Mammary epithelial cell (primary cell): ENCODE measurements at regions of chr3 and their contacts with region 1.

Region 1: DNA sequence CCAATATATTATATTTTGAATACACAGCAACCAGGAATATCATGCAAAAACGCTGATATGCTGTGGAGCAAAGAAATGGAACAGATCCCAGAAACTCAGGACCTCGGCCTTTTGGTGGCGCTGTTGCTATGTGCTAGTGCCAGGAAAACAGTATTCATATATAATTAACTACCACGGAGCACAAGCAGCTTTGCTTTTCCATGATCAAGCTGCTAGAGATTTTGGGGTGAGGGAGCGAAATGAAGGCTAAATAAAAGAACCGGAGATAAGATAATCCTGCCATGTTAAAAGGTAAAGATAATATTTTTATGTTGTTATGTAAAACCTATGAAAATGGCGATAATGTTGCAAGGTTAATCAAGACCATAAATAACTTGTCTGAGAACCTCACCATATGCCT is 157.7 kb upstream of the FAM3D start:
- DNase-seq: peak; percentile 64
- H3K4me3 ChIP-seq: no peak overlapping the region
- H3K27ac ChIP-seq: no peak overlapping the region
- H3K4me1 ChIP-seq: peaks cover 5% of the 10 kb centered on the region
- H3K27me3 ChIP-seq: no peaks in the 10 kb centered on the region
- CTCF ChIP-seq: peak; percentile 85 to 86

Region 2: DNA sequence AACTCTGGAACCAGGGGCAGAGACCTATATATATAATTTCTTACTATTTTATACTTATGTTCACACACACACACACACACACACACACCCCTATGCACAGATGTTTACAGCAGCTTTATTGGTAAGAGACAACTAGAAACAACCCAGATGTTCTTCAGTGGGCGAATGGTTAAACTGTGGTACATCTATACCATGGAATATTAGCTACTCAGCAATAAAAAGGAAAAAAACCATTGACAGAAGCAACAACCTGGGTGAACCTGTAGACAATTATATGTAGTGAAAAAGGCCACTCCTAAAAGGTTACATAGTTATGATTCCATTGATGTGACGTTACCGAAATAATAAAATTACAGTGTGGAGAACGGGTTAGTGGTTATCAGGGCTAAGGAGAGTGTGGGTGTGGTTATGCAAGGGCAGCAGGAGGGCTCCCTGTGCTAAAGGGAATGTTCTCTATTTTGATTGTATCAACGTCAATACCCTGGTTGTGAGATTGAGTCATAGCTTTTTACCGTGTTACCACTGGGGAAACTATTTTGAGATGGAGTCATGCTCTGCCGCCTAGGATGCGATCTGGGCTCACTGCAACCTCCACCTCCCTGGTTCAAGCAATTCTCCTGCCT is 730.6 kb before region 1 on chr3:
- CTCF ChIA-PET with region 1: no interaction called
- dilution Hi-C with region 1: no loop called
- in situ Hi-C with region 1: no loop called
- intact Hi-C with region 1: no loop called
- DNase-seq: peak; percentile 82
- H3K4me3 ChIP-seq: no peak overlapping the region
- H3K27ac ChIP-seq: no peak overlapping the region
- H3K4me1 ChIP-seq: no peaks in the 10 kb centered on the region
- H3K27me3 ChIP-seq: no peaks in the 10 kb centered on the region
- CTCF ChIP-seq: no peak

Region 3: DNA sequence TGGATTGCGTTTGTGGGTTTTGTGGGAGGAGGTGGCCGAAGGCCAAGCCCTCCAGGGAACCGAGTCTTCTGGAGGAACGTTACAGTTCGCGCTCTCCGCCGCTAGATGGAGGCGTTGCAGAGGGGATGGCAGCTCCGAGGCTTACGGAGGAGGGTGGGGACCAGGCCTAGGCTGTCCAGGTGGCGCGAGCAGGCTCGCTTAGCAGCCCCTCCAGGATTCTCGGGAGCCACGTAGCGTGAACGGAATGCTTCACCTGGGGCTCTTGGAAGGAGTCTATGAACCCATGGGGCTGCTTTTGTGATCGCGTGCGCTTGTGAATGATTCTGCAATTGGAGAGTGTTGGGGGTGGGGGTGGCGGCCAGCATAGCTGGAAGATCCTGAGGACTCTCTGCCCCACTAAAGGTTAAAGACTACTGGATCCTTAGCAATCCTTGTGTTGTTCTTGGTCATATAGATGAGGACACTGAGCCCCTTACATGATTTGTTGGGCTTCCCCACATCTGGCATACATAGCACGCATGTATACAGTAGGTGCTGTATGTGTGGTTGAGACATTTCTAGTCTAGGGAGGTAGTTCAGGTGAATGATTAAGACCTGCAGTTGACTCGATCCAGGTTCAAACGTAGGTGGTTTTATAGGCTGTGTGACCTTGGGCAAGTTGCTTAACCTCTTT is 183.4 kb before region 1 on chr3:
- CTCF ChIA-PET with region 1: no interaction called
- dilution Hi-C with region 1: no loop called
- in situ Hi-C with region 1: no loop called
- intact Hi-C with region 1: loop called (anchors 5 kb)
- DNase-seq: peak; percentile 64
- H3K4me3 ChIP-seq: no peak overlapping the region
- H3K27ac ChIP-seq: no peak overlapping the region
- H3K4me1 ChIP-seq: peaks cover 10% of the 10 kb centered on the region
- H3K27me3 ChIP-seq: no peaks in the 10 kb centered on the region
- CTCF ChIP-seq: peak; percentile 75 to 96

Region 4: DNA sequence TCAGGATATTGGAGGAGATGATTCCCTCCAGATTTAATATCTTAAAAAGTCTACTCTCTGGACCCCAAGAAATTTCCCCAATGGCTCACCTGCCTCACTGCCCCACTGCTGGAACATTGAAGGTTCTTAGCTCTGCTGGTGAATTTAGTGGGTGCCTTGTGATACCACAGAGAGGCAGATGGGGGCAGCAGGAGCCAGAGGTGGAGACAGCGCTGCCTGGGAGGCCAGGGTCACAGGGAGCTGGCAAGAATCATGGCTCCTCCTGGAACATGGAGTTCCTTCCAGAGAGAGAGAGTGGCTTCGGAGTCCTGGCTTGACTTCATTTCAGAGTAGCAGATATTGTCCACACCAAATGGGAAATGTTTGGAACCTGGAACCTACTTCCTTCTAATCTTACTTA is 489.1 kb after region 1 on chr3:
- CTCF ChIA-PET with region 1: interaction called, 4 read pairs
- dilution Hi-C with region 1: no loop called
- in situ Hi-C with region 1: no loop called
- intact Hi-C with region 1: loop called (anchors 10 kb)
- DNase-seq: peak; percentile 26
- H3K4me3 ChIP-seq: no peak overlapping the region
- H3K27ac ChIP-seq: no peak overlapping the region
- H3K4me1 ChIP-seq: peaks cover 15% of the 10 kb centered on the region
- H3K27me3 ChIP-seq: no peaks in the 10 kb centered on the region
- CTCF ChIP-seq: peak; percentile 59 to 78

Region 5: DNA sequence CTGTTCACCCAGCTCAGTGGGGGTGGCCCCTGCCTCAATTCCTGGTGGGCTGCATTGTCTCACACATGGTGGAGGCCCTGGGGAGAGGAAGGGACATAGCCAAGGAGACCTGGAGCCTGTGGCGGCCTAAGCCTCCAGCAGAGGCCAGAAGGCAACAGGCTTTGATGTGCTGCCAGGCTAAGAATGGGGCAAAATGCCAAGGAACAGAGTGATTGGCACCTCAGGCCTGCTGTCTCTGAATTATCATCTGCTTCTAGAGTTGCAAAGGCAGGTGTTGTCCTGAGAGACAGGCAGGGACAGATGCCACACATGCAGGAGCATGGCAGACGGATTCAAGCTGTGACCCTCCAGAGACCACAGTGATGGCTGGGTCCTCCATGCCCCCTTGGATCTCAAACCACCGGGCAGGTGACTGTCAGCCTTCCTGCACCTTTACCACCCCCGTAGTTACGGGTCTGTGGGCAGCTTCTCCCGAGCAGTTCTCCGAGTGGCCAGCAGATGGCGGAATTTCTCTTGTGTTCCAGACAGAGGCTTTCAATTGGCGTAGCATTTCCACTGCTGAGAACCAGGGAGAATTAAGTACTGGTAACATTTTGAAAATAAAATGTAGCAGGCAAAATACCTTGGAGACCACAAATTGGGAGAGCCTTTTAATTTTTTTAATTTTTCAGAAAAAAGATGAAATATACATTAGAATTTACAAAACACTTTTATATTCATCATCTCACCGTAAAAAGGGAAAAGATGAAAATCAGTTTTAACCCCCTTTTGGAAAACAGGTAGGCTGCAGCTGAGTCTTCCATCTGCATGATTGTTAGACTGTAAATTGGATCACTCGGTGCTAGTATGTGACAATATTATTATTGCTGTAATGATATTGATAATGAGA is 751.1 kb after region 1 on chr3:
- CTCF ChIA-PET with region 1: no interaction called
- dilution Hi-C with region 1: no loop called
- in situ Hi-C with region 1: no loop called
- intact Hi-C with region 1: loop called (anchors 5 kb)
- DNase-seq: peak; percentile 70
- H3K4me3 ChIP-seq: no peak overlapping the region
- H3K27ac ChIP-seq: no peak overlapping the region
- H3K4me1 ChIP-seq: peaks cover 30% of the 10 kb centered on the region
- H3K27me3 ChIP-seq: no peaks in the 10 kb centered on the region
- CTCF ChIP-seq: peak; percentile 95 to 97